IMR-90 (cell line): ENCODE measurements at regions of chr11 and their contacts with region 1.

Region 1: DNA sequence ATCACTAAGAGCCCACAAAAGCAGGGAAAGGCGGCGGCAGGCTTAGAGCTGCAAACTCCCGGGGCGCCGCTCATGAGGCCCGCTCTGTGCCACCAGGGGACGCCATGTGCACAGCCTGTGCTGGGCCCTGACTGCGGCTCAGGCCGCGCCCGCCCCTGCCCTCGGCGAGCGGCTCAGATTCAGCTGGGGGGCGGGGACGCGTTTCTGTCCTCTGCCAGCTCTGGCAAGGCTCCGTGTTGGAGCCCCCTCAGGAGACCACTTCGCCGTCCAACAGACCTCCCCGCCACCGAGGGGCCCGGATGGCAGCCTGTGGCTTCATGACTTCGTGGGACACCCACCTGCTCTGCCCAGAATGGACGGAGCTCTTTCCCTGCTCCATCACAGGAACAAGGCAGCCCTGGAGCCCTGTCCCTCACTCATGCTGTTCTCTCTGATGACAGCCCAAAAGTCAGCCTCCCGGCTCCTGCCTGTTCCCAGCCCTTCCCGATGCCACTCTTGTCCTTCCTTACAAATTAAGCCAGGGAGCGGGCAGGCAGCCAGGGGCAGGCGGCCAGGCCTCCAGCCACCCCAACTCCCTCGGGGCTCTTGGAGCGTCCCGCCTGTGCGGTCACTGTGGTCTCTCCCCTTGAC is 69.1 kb downstream of the NAT10 start:
- DNase-seq: peak; percentile 49
- ATAC-seq: peak; percentile 99
- H3K4me3 ChIP-seq: no peak overlapping the region
- H3K27ac ChIP-seq: no peak overlapping the region
- H3K4me1 ChIP-seq: peaks cover 6% of the 10 kb centered on the region; the same call in 1 of the 2 replicates
- H3K27me3 ChIP-seq: peaks cover 11% of the 10 kb centered on the region
- CTCF ChIP-seq: peak; percentile 98
- POLR2A ChIP-seq: 0 out of 2 replicates have a peak, but pooled peaks have one; percentile 55
- RAD21 ChIP-seq: peak; percentile 100

Region 2: GRCh38 chr11:33996498-33997454 is 177.8 kb before region 1 on chr11:
- CTCF ChIA-PET with region 1: interaction called, 5 read pairs
- POLR2A ChIA-PET with region 1: no interaction called
- dilution Hi-C with region 1: no loop called
- in situ Hi-C with region 1: no loop called
- intact Hi-C with region 1: loop called (anchors 2 kb)
- DNase-seq: peak; percentile 65
- ATAC-seq: peak; percentile 100
- H3K4me3 ChIP-seq: no peak overlapping the region
- H3K27ac ChIP-seq: no peak overlapping the region
- H3K4me1 ChIP-seq: no peaks in the 10 kb centered on the region
- H3K27me3 ChIP-seq: peaks cover 16% of the 10 kb centered on the region
- CTCF ChIP-seq: peak; percentile 76
- POLR2A ChIP-seq: no peak
- RAD21 ChIP-seq: peak; percentile 80

Region 3: GRCh38 chr11:34185926-34186841 is 11.7 kb after region 1 on chr11:
- CTCF ChIA-PET with region 1: interaction called, 16 read pairs
- POLR2A ChIA-PET with region 1: no interaction called
- dilution Hi-C with region 1: no loop called
- in situ Hi-C with region 1: no loop called
- intact Hi-C with region 1: no loop called
- DNase-seq: no peak
- ATAC-seq: no peak
- H3K4me3 ChIP-seq: no peak overlapping the region
- H3K27ac ChIP-seq: no peak overlapping the region
- H3K4me1 ChIP-seq: no peaks in the 10 kb centered on the region; the same call in 1 of the 2 replicates
- H3K27me3 ChIP-seq: peaks cover 2% of the 10 kb centered on the region
- CTCF ChIP-seq: no peak
- POLR2A ChIP-seq: no peak
- RAD21 ChIP-seq: no peak

Region 4: DNA sequence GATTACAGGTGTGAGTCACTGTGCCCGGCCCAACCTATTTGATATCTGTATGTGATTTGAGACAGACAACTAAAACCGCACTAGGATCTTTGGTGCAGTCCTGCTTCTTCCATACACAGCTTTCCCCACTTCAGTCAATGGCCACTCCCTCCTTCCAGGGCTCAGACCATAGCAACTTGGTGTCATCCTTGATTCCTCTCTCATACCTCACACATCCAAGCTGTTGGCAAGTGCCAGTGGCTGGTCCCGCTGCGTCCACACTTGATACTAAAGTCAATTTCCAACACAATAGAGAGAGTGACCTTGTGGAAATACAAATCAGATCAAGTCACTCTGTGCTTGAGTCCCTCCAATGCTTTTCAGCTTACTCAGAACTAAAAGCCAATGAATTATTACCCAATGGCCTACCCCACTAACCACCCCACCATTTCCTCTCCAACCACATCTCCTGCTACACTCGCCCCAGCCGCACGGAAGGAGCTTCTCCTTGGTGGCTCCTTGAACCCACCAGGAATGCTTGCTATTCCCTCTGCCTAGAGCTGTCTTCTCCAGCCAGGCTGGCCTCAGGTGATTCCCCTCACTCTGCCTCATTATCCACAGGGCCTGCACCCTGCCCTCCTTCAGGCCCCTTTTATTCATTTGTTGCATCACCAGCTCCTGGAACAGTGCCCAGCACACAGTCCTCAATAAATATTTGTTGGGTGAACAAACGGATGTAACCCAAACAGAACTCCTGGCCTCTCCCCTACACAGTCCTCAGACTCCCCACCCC is 170.4 kb after region 1 on chr11:
- CTCF ChIA-PET with region 1: interaction called, 14 read pairs
- POLR2A ChIA-PET with region 1: no interaction called
- dilution Hi-C with region 1: loop called (anchors 25 kb)
- in situ Hi-C with region 1: no loop called
- intact Hi-C with region 1: no loop called
- DNase-seq: peak; percentile 66
- ATAC-seq: peak; percentile 39
- H3K4me3 ChIP-seq: no peak overlapping the region
- H3K27ac ChIP-seq: no peak overlapping the region
- H3K4me1 ChIP-seq: peaks cover 27% of the 10 kb centered on the region
- H3K27me3 ChIP-seq: peaks cover 8% of the 10 kb centered on the region
- CTCF ChIP-seq: no peak
- POLR2A ChIP-seq: no peak
- RAD21 ChIP-seq: no peak

Region 5: GRCh38 chr11:34366522-34366921 is 192.0 kb after region 1 on chr11:
- CTCF ChIA-PET with region 1: interaction called, 13 read pairs
- POLR2A ChIA-PET with region 1: no interaction called
- dilution Hi-C with region 1: no loop called
- in situ Hi-C with region 1: no loop called
- intact Hi-C with region 1: no loop called
- DNase-seq: no peak
- ATAC-seq: no peak
- H3K4me3 ChIP-seq: no peak overlapping the region
- H3K27ac ChIP-seq: no peak overlapping the region
- H3K4me1 ChIP-seq: no peaks in the 10 kb centered on the region
- H3K27me3 ChIP-seq: peaks cover 19% of the 10 kb centered on the region
- CTCF ChIP-seq: 0 out of 2 replicates have a peak, but pooled peaks have one; percentile 16
- POLR2A ChIP-seq: no peak
- RAD21 ChIP-seq: no peak

Region 6: GRCh38 chr11:34492806-34493414 is 318.4 kb after region 1 on chr11:
- CTCF ChIA-PET with region 1: interaction called, 3 read pairs
- POLR2A ChIA-PET with region 1: no interaction called
- dilution Hi-C with region 1: no loop called
- in situ Hi-C with region 1: loop called (anchors 10 kb)
- intact Hi-C with region 1: loop called (anchors 5 kb)
- DNase-seq: peak; percentile 51
- ATAC-seq: peak; percentile 75
- H3K4me3 ChIP-seq: no peak overlapping the region
- H3K27ac ChIP-seq: no peak overlapping the region
- H3K4me1 ChIP-seq: no peaks in the 10 kb centered on the region
- H3K27me3 ChIP-seq: peaks cover 46% of the 10 kb centered on the region
- CTCF ChIP-seq: peak; percentile 69
- POLR2A ChIP-seq: no peak
- RAD21 ChIP-seq: peak; percentile 52